ENCODE measurements at regions of chr17 and their contacts with region 1.

Region 1: GRCh38 chr17:28951991-28952975 is 965 bp upstream of the PHF12 start:
- DNase-seq: peak; percentile 87 to 99
- ATAC-seq: peak; percentile 62 to 87 (median 71)
- H3K4me3 ChIP-seq: peak overlapping the region; percentile 65
- H3K4me3 Mint-ChIP-seq: no peak overlapping the region
- H3K27ac ChIP-seq: peak overlapping the region; percentile 97
- H3K27ac Mint-ChIP-seq: no peak overlapping the region
- H3K4me1 ChIP-seq: peaks cover 24% of the 10 kb centered on the region
- H3K4me1 Mint-ChIP-seq: peaks cover 16 to 21% of the 10 kb centered on the region in 2 donors
- H3K27me3 ChIP-seq: no peaks in the 10 kb centered on the region
- H3K27me3 Mint-ChIP-seq: no peaks in the 10 kb centered on the region
- CTCF ChIP-seq: no peak

Region 2: GRCh38 chr17:28717578-28718333 is 234.5 kb before region 1 on chr17 and contains the start of gene RAB34:
- intact Hi-C with region 1: loop called (anchors 1 kb)
- DNase-seq: peak in 1 of 2 donors; percentile 37
- ATAC-seq: no peak
- H3K4me3 ChIP-seq: peak within 1 kb of the TSS; percentile 26
- H3K4me3 Mint-ChIP-seq: peak within 1 kb of the TSS; percentile 40
- H3K27ac ChIP-seq: no peak within 1 kb of the TSS
- H3K27ac Mint-ChIP-seq: peak within 1 kb of the TSS; percentile 3 to 16
- H3K4me1 ChIP-seq: peaks cover 47% of the 10 kb centered on the region
- H3K4me1 Mint-ChIP-seq: peaks cover 17 to 36% of the 10 kb centered on the region in 2 donors
- H3K27me3 ChIP-seq: peaks cover 14% of the 10 kb centered on the region
- H3K27me3 Mint-ChIP-seq: peaks cover 15 to 28% of the 10 kb centered on the region in 2 donors
- CTCF ChIP-seq: no peak
- total RNA-seq, gene RAB34: 3.7 to 12.9 (median 3.8) TPM

Region 3: DNA sequence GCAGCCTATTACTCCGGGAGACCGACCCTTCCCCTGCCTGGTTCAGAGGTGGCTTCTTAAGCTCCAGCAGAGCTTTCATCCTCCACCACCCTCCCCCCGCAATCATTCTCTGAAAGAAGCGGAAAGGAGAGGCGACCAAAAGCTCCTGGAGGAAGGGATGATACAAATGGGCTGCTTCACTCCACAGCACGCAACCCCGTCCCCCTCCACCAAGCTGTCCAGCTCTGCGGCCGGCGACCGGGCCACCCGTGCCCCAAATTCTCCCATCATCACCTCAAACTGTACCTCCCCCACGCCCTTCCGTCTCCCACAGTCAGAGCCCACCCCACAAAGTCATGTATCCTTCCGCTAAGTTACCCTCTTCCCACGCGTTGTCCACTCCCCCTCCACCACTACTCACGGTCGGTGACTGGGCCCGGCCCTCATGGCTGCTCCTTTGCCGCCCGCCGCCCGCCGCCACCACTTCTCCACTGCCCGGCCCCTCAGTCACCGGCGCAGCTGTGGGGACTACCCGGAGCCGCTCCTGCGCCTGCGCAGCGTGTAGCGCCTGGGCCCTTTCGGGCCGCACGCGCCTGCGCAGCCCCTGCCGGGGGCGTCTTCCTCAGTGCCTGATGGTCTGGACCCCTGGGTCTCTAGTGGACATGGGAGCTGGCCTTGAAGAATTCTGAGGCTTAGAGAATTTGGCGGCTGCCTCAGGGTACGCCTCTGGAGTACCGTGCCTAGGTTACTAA is 109.8 kb before region 1 on chr17 and contains the start of gene FAM222B:
- intact Hi-C with region 1: loop called (anchors 2 kb)
- DNase-seq: peak; percentile 82 to 95
- ATAC-seq: peak; percentile 96 to 98 (median 97)
- H3K4me3 ChIP-seq: peak within 1 kb of the TSS; percentile 86
- H3K4me3 Mint-ChIP-seq: peak within 1 kb of the TSS; percentile 94
- H3K27ac ChIP-seq: peak within 1 kb of the TSS; percentile 64
- H3K27ac Mint-ChIP-seq: peak within 1 kb of the TSS; percentile 92 to 99
- H3K4me1 ChIP-seq: peaks cover 17% of the 10 kb centered on the region
- H3K4me1 Mint-ChIP-seq: peaks cover 13 to 21% of the 10 kb centered on the region in 2 donors
- H3K27me3 ChIP-seq: no peaks in the 10 kb centered on the region
- H3K27me3 Mint-ChIP-seq: no peaks in the 10 kb centered on the region
- CTCF ChIP-seq: no peak
- total RNA-seq, gene FAM222B: 16.9 to 26.0 (median 20.0) TPM

Region 4: GRCh38 chr17:28925912-28926365 is 26.3 kb before region 1 on chr17:
- intact Hi-C with region 1: loop called (anchors 1 kb)
- DNase-seq: peak; percentile 35 to 93
- ATAC-seq: peak; percentile 86 to 95 (median 93)
- H3K4me3 ChIP-seq: peak overlapping the region; percentile 14
- H3K4me3 Mint-ChIP-seq: peak overlapping the region; percentile 86
- H3K27ac ChIP-seq: peak overlapping the region; percentile 94
- H3K27ac Mint-ChIP-seq: peak overlapping the region; percentile 92 to 100
- H3K4me1 ChIP-seq: peaks cover 42% of the 10 kb centered on the region
- H3K4me1 Mint-ChIP-seq: peaks cover 59 to 64% of the 10 kb centered on the region in 2 donors
- H3K27me3 ChIP-seq: no peaks in the 10 kb centered on the region
- H3K27me3 Mint-ChIP-seq: no peaks in the 10 kb centered on the region
- CTCF ChIP-seq: no peak

Region 5: DNA sequence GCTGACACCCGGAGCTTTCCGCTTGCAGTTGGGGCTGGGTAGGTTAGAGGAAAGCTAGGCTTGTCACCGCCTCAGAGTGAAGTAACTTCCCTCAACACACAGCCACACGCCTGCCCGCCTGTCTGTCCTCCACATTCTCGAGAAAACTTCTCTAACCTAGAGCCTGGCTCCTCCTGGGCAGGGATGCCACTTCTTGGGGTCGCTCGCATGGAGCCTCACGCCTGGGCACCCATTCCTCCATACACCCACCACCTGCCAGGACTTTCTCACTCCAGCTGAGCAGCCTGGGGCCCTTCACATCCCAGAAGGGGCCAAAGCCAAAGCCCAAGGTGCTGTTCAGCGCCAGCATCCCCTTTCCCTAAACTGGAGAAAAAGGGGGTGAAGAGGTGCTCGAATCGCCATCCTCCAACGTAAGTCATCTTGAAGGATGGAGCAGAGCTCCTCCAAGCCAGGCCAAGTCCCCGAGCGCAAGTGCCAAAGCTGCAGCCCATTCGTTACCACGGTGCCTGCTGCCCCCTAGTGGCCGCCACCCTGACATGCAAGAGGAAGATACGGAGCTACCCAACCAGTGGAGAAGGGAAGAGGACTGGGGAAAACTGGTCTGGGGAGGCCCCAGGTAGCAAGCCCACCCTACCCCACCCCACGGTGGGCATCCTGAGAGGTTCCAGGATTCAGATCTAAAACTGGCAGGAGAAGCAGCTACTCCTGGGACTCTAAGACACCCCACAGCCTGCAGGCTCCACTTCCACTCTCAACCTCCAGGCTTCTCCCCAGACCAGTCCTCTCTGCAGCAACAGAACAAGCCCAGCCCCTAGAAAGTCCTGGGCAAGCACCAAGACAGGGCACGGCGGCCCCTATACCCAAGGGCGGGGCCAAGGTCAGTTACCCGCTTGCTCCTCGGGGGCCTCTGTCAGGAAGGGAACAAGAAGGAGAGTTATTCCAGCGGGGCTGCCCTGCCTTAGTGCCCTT is 164.8 kb after region 1 on chr17:
- intact Hi-C with region 1: loop called (anchors 5 kb)
- DNase-seq: peak; percentile 76 to 87
- ATAC-seq: peak; percentile 81 to 85 (median 82)
- H3K4me3 ChIP-seq: no peak overlapping the region
- H3K4me3 Mint-ChIP-seq: no peak overlapping the region
- H3K27ac ChIP-seq: no peak overlapping the region
- H3K27ac Mint-ChIP-seq: peak overlapping the region; percentile 41 to 46
- H3K4me1 ChIP-seq: peaks cover 6% of the 10 kb centered on the region
- H3K4me1 Mint-ChIP-seq: peaks cover 9 to 12% of the 10 kb centered on the region in 2 donors
- H3K27me3 ChIP-seq: no peaks in the 10 kb centered on the region
- H3K27me3 Mint-ChIP-seq: no peaks in the 10 kb centered on the region
- CTCF ChIP-seq: peak; percentile 97

Measured in natural killer cell (primary cell).